CD4-positive, alpha-beta T cell (primary cell): ENCODE measurements at regions of chr15 and their contacts with region 1.

Region 1: GRCh38 chr15:65638681-65639089 is 16.9 kb downstream of the SLC24A1 start:
- DNase-seq: peak in 11 of 14 experiments; percentile 4 to 84 (median 18)
- ATAC-seq: peak; percentile 91
- H3K4me3 ChIP-seq: no peak overlapping the region
- H3K4me3 Mint-ChIP-seq: no peak overlapping the region
- H3K27ac ChIP-seq: no peak overlapping the region
- H3K27ac Mint-ChIP-seq: no peak overlapping the region
- H3K4me1 ChIP-seq: peaks cover 6% of the 10 kb centered on the region
- H3K4me1 Mint-ChIP-seq: peaks cover 7% of the 10 kb centered on the region
- H3K27me3 ChIP-seq: no peaks in the 10 kb centered on the region
- H3K27me3 Mint-ChIP-seq: no peaks in the 10 kb centered on the region
- CTCF ChIP-seq: peak; percentile 82

Region 2: DNA sequence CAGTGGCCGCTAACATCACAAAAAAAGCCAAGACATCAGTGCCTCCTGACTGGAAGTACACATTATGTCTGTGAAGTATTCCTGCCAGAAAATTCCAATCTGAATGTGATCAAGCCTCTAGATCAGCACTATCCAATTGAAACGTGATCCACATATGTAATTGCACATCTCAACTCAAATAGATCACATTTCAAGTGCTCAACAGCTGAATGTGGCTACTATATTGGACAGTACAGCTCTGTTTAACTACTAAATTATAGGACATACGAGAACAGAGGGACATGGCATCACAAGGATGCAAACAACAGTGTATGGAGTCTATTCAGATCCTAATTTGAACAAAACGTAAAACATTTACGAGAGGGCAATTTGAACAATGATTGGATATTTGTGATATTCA is 523.1 kb before region 1 on chr15:
- CTCF ChIA-PET with region 1: no interaction called
- POLR2A ChIA-PET with region 1: no interaction called
- intact Hi-C with region 1: no loop called
- DNase-seq: no peak
- ATAC-seq: no peak
- H3K4me3 ChIP-seq: no peak overlapping the region
- H3K4me3 Mint-ChIP-seq: no peak overlapping the region
- H3K27ac ChIP-seq: no peak overlapping the region
- H3K27ac Mint-ChIP-seq: no peak overlapping the region
- H3K4me1 ChIP-seq: no peaks in the 10 kb centered on the region
- H3K4me1 Mint-ChIP-seq: peaks cover 11% of the 10 kb centered on the region
- H3K27me3 ChIP-seq: no peaks in the 10 kb centered on the region
- H3K27me3 Mint-ChIP-seq: no peaks in the 10 kb centered on the region
- CTCF ChIP-seq: no peak

Region 3: GRCh38 chr15:65856821-65857455 is 218.3 kb after region 1 on chr15:
- CTCF ChIA-PET with region 1: interaction called, 5 read pairs
- POLR2A ChIA-PET with region 1: no interaction called
- intact Hi-C with region 1: loop called (anchors 1 to 2 kb)
- DNase-seq: peak; percentile 73 to 91 (median 80)
- ATAC-seq: peak; percentile 94
- H3K4me3 ChIP-seq: no peak overlapping the region
- H3K4me3 Mint-ChIP-seq: no peak overlapping the region
- H3K27ac ChIP-seq: no peak overlapping the region
- H3K27ac Mint-ChIP-seq: no peak overlapping the region
- H3K4me1 ChIP-seq: no peaks in the 10 kb centered on the region
- H3K4me1 Mint-ChIP-seq: peaks cover 6% of the 10 kb centered on the region
- H3K27me3 ChIP-seq: no peaks in the 10 kb centered on the region
- H3K27me3 Mint-ChIP-seq: no peaks in the 10 kb centered on the region
- CTCF ChIP-seq: peak; percentile 92

Region 4: GRCh38 chr15:65980824-65981456 is 342.3 kb after region 1 on chr15:
- CTCF ChIA-PET with region 1: no interaction called
- POLR2A ChIA-PET with region 1: no interaction called
- intact Hi-C with region 1: loop called in 1 of 2 experiments (anchors 5 kb)
- DNase-seq: peak in 4 of 14 experiments; percentile 5 to 32 (median 24)
- ATAC-seq: no peak
- H3K4me3 ChIP-seq: no peak overlapping the region
- H3K4me3 Mint-ChIP-seq: peak overlapping the region; percentile 38
- H3K27ac ChIP-seq: no peak overlapping the region
- H3K27ac Mint-ChIP-seq: no peak overlapping the region
- H3K4me1 ChIP-seq: peaks cover 12% of the 10 kb centered on the region
- H3K4me1 Mint-ChIP-seq: peaks cover 15% of the 10 kb centered on the region
- H3K27me3 ChIP-seq: peaks cover 20 to 23% of the 10 kb centered on the region in 2 experiments
- H3K27me3 Mint-ChIP-seq: peaks cover 34% of the 10 kb centered on the region
- CTCF ChIP-seq: no peak

Region 5: GRCh38 chr15:66287461-66288057 is 648.9 kb after region 1 on chr15:
- CTCF ChIA-PET with region 1: interaction called, 3 read pairs
- POLR2A ChIA-PET with region 1: no interaction called
- intact Hi-C with region 1: loop called (anchors 1 to 2 kb)
- DNase-seq: peak in 3 of 14 experiments; percentile 24 to 68 (median 59)
- ATAC-seq: no peak
- H3K4me3 ChIP-seq: no peak overlapping the region
- H3K4me3 Mint-ChIP-seq: no peak overlapping the region
- H3K27ac ChIP-seq: no peak overlapping the region
- H3K27ac Mint-ChIP-seq: no peak overlapping the region
- H3K4me1 ChIP-seq: peaks cover 18% of the 10 kb centered on the region
- H3K4me1 Mint-ChIP-seq: peaks cover 27% of the 10 kb centered on the region
- H3K27me3 ChIP-seq: no peaks in the 10 kb centered on the region
- H3K27me3 Mint-ChIP-seq: no peaks in the 10 kb centered on the region
- CTCF ChIP-seq: peak; percentile 91